ENCODE measurements at regions of chr9 and their contacts with region 1.

Region 1: DNA sequence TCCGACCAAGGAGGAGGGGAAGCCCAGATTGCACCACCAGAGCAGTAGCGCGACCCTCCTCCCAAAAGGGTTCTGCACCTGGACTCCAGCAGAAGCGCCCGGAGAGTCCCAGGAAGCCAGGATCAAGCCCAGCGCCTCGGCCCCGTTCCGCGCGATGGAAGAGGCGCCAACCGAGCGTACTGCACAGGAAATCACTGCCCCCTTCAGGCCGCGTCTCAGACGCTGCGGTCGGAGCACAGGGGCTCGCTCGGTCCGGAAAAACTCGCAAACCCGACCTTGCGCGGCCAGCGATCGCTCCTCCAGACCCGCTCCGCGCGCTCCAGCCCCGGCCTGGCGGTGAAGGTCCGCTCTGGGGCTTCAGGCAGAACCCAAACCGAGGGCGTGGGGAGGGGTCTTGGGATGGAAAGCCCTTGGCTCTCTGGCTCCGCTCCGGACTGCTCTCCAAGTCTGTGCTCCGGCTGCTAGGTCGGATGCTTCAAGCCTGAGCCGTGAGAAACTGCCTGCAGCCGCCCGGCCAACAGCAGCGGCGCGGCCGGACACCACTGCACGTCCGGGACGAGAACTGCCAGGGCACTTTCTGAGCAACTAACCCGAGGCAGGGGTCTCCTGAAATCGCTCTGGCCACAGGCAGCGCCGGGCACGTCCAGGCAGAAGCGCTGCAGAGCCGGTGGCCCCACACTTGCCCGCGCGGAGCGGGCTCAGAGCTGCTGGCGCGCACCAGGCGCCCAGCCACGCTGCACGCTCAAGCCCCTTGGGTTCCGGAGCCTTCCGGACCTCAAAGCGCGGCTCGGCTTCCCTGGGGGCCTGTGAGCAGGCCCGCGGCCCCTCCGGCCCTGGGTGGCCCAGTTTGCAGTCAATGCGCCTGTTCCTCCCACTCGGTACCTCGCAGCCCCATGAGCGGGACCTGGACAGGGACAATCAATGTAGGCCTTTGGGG is 1.3 kb downstream of the GABBR2 start:
- DNase-seq: peak; percentile 46
- H3K4me3 ChIP-seq: peak overlapping the region; percentile 56
- H3K27ac ChIP-seq: no peak overlapping the region
- H3K27me3 ChIP-seq: peaks cover 50% of the 10 kb centered on the region
- CTCF ChIP-seq: peak; percentile 79

Region 2: GRCh38 chr9:98315551-98316060 is 391.8 kb before region 1 on chr9:
- CTCF ChIA-PET with region 1: interaction called, 13 read pairs
- POLR2A ChIA-PET with region 1: no interaction called
- DNase-seq: peak; percentile 67
- H3K4me3 ChIP-seq: no peak overlapping the region
- H3K27ac ChIP-seq: no peak overlapping the region
- H3K27me3 ChIP-seq: no peaks in the 10 kb centered on the region
- CTCF ChIP-seq: peak; percentile 94

Region 3: DNA sequence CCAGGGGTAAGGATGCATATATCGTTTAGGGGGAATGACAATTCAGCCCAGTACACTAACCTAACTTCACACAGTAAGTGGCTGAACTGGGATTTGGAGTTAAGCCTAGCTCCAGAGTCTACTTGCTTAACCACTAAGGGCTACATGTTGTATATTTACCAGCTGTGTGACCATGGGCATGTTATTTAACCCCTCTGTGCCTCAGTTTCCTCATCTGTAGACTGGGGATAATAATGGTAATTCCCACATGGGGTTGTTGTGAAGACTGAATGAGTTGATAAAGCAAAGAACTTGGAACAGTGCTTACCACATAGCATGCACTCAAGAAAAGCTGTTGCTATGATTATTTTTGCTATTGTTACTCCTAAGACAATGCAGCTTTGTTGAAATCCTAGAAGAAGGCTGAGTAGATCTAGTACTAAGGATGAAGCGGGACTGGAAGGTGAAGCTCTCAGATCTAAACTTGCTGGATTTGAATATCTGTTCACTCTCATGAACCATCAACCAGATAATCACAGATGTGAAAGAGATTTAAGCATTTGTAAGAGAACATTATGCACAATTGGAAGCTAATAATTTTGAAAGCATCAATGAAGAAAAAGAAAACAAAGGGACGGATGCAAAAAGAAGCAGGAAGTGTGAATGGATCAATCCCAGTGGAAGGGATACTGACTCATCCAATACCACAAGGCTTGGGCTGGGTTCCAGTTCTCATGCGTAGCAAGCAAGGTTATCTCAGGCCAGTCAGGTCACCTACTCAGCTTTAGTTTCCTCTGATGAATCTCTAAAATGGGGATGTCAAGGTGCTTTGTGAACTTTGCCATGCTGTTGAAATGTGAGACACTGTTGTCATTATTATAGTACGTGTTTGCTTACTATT is 373.5 kb before region 1 on chr9:
- CTCF ChIA-PET with region 1: interaction called, 10 read pairs
- POLR2A ChIA-PET with region 1: no interaction called
- DNase-seq: peak; percentile 44
- H3K4me3 ChIP-seq: no peak overlapping the region
- H3K27ac ChIP-seq: no peak overlapping the region
- H3K27me3 ChIP-seq: no peaks in the 10 kb centered on the region
- CTCF ChIP-seq: no peak

Region 4: DNA sequence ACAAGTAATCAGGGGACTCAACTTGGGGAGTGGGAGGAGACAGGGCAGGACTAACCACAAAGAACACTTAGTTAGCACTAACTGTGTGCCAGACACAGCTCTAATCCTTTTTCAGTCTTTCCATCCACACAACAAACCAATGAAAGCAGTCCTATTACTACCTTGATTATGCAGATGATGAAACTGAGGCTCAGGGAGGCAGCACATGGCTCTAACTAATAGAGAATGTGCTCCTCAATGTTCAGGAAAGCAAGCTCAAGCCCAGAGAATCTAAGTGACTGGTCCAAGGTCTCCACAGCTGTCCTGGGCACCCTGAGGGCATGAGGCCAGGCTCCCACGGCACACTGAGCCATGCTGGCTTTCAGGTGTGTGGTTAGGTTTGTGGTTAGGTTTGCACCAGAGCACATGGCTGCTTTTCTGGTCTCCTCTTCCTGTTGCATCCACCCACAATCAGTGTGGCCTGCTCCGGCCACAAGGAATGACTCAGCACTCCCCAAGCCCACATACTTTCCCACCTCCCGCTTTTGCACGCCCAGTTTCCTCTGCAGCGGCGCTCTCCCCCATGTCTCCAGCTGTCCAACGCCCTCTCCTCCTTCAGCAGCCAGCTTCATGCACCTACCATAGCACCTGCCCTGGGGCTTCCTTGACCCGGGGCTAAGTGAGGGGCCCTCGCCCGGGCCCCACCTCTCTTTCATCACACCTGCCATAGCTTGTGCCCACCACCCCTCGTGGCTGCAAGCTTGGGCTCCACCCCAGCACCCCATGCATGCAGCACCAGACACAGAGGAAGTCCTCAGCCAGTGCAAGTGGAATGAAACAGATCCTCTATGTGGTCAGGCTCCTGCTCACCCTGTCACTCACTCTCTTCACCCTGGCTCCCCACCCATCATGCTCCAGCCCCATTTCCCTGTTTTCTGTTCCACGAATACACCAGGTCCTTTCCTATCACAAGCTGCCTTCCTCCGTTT is 131.8 kb before region 1 on chr9:
- CTCF ChIA-PET with region 1: no interaction called
- POLR2A ChIA-PET with region 1: no interaction called
- DNase-seq: peak; percentile 16
- H3K4me3 ChIP-seq: no peak overlapping the region
- H3K27ac ChIP-seq: no peak overlapping the region
- H3K27me3 ChIP-seq: peaks cover 17% of the 10 kb centered on the region
- CTCF ChIP-seq: no peak

Region 5: DNA sequence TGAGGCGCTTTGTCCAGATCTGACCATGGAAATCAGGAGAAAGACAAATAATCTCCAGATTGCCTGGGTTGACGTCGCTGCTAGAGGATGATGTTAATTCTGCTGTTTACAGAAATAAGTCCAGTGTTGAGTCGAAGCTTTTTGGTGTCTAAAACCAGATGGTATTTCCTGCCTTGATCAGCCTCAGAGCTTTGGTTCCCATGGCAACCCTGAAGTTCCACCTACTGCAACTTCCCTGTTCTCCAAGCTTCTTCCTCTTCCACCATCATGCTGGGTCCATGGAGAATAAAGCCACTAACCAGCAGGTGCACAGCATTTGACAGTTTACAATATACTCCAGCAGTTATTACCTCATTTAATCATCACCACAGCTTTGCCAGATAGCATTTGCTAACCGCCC is 19.3 kb after region 1 on chr9:
- CTCF ChIA-PET with region 1: no interaction called
- POLR2A ChIA-PET with region 1: no interaction called
- DNase-seq: peak; percentile 51
- H3K4me3 ChIP-seq: no peak overlapping the region
- H3K27ac ChIP-seq: no peak overlapping the region
- H3K27me3 ChIP-seq: peaks cover 25% of the 10 kb centered on the region
- CTCF ChIP-seq: no peak

Measured in AG04450 (cell line).